ENCODE measurements at regions of chr5 and their contacts with region 1.

Region 1: DNA sequence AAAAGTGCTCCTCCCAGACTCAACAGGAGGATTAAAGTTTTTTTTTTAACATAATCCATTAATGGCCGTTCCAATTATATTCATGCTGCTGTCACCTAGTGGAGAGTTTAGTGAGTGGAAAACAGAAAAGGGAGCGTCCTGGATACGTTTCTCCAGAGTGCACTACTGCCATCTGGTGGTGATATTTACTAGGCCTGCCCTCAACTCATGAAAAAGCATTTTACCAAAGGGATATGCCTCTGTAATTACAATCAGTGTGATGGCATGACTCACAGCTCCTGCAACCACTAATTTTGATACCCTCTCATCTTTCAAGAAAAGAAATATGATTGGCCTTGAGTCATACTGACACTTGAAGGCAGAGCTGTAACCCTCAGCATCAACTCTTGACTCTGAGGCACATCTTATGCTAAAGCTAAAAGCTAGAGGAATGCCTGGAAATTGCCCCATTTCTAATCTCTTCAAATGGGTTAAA is 20.0 kb downstream of the MINAR2 start:
- DNase-seq: peak; percentile 78
- ATAC-seq: peak; percentile 94
- H3K4me3 ChIP-seq: no peak overlapping the region
- H3K27ac ChIP-seq: no peak overlapping the region
- H3K4me1 ChIP-seq: no peaks in the 10 kb centered on the region
- H3K27me3 ChIP-seq: no peaks in the 10 kb centered on the region
- CTCF ChIP-seq: peak; percentile 95

Region 2: DNA sequence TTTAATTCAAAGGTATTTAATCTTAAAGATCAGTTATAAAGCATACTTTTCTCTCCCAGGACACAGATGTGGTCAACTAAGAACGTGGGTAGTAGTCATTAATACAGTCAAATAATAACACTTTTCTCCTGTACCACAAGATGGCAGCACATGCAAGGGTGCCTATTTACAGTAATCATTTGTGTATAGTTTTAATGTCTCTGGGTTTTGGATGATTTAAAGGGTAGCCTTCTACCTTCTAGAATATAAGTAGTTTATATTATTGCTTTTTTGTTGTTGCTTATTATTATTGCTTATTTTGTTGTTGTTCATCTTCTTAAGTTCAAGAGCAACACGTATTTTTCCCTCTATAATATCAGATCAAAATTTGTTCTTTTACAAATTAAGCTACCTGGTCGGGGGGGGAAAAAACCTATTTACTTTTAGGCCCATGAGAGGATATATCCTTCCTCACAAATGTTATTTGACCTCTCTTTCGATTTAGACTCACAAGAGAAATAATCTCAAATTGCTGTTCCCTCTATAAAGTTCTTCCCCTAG is 862.3 kb before region 1 on chr5:
- CTCF ChIA-PET with region 1: no interaction called
- POLR2A ChIA-PET with region 1: no interaction called
- in situ Hi-C with region 1: no loop called
- intact Hi-C with region 1: loop called (anchors 2 kb)
- DNase-seq: peak; percentile 25
- ATAC-seq: peak; percentile 85
- H3K4me3 ChIP-seq: no peak overlapping the region
- H3K27ac ChIP-seq: no peak overlapping the region
- H3K4me1 ChIP-seq: no peaks in the 10 kb centered on the region
- H3K27me3 ChIP-seq: no peaks in the 10 kb centered on the region
- CTCF ChIP-seq: peak; percentile 79; the same call in 1 of the 2 replicates

Region 3: GRCh38 chr5:129172580-129172979 is 595.4 kb before region 1 on chr5:
- CTCF ChIA-PET with region 1: no interaction called
- POLR2A ChIA-PET with region 1: no interaction called
- in situ Hi-C with region 1: no loop called
- intact Hi-C with region 1: loop called (anchors 2 kb)
- DNase-seq: no peak
- ATAC-seq: no peak
- H3K4me3 ChIP-seq: no peak overlapping the region
- H3K27ac ChIP-seq: no peak overlapping the region
- H3K4me1 ChIP-seq: no peaks in the 10 kb centered on the region
- H3K27me3 ChIP-seq: no peaks in the 10 kb centered on the region
- CTCF ChIP-seq: peak; percentile 11; the same call in 1 of the 2 replicates

Region 4: GRCh38 chr5:129664337-129664937 is 103.5 kb before region 1 on chr5:
- CTCF ChIA-PET with region 1: no interaction called
- POLR2A ChIA-PET with region 1: no interaction called
- in situ Hi-C with region 1: no loop called
- intact Hi-C with region 1: loop called (anchors 2 kb)
- DNase-seq: peak; percentile 35
- ATAC-seq: no peak
- H3K4me3 ChIP-seq: no peak overlapping the region
- H3K27ac ChIP-seq: no peak overlapping the region
- H3K4me1 ChIP-seq: no peaks in the 10 kb centered on the region
- H3K27me3 ChIP-seq: no peaks in the 10 kb centered on the region
- CTCF ChIP-seq: peak; percentile 71; the same call in 1 of the 2 replicates

Region 5: DNA sequence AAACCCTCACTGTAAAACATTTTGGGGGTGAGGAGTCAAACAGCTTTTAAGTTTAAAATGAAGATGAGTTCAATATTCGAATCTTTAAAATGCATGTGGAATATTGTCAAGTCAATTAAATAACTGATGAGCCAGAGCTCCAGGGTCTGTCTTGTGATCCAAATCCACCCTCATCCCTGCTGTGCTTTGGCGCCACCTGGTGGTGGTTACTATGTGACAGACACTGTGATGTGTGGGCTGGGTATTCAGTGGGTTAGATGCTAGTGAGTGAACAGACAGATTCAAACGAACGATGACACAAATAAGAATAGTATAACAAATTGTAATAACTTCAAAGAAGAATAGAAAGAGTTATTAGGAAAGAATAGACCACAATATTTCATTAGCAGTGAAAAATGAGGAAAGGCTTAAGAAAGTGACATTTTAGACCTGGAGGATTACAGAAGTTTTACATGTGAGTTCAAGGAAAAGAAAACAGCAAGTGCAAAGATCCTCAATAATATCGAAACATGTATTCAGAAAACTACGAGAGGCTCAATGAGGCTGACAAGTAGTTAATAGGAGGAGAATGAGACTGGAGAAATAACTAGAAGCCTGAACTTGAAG is 84.9 kb after region 1 on chr5:
- CTCF ChIA-PET with region 1: interaction called, 7 read pairs
- POLR2A ChIA-PET with region 1: no interaction called
- in situ Hi-C with region 1: no loop called
- intact Hi-C with region 1: loop called (anchors 1 kb)
- DNase-seq: peak; percentile 50
- ATAC-seq: peak; percentile 95
- H3K4me3 ChIP-seq: no peak overlapping the region
- H3K27ac ChIP-seq: no peak overlapping the region
- H3K4me1 ChIP-seq: no peaks in the 10 kb centered on the region
- H3K27me3 ChIP-seq: 0 out of 2 replicates have a peak, but pooled peaks cover 2% of the 10 kb centered on the region
- CTCF ChIP-seq: peak; percentile 93

Region 6: GRCh38 chr5:131109540-131110255 is 1341.8 kb after region 1 on chr5:
- CTCF ChIA-PET with region 1: no interaction called
- POLR2A ChIA-PET with region 1: no interaction called
- in situ Hi-C with region 1: no loop called
- intact Hi-C with region 1: loop called (anchors 2 kb)
- DNase-seq: peak; percentile 17
- ATAC-seq: peak; percentile 85
- H3K4me3 ChIP-seq: no peak overlapping the region
- H3K27ac ChIP-seq: no peak overlapping the region
- H3K4me1 ChIP-seq: no peaks in the 10 kb centered on the region
- H3K27me3 ChIP-seq: peaks cover 9% of the 10 kb centered on the region; the same call in 1 of the 2 replicates
- CTCF ChIP-seq: peak; percentile 75; the same call in 1 of the 2 replicates